ENCODE measurements at regions of chr11 and their contacts with region 1.

Region 1: DNA sequence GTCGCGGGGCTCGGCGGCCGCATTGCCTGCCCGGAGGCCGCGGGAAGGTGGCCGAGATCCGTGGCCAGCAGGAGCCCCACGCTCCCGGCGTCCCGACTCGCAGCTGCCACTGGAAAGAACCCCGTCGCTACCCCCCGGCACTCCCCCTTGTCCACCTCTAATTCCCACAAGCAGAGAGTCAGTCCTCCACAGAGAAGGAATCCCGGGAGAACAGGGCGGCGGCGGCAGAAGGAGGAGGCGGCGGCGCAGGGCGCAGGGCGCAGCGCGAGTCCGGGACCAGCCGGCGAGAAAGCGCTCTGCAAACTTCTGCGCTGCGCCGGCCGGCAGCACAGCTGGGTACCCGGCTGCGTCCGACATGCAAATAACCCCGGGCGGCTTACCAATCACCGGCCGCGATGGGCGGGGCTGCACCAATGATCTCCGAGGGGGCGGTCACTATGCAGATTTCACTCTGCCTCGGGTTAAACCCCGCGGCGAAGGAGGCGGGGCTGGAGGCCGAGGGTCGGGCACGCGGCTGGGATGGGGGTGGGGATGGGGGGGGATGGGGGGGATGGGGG is at the start of gene ABTB2:
- DNase-seq: peak; percentile 99
- H3K4me3 ChIP-seq: peak within 1 kb of the TSS; percentile 40 to 64 (median 54)
- H3K27ac ChIP-seq: peak within 1 kb of the TSS; percentile 83 to 88 (median 85)
- H3K4me1 ChIP-seq: peaks cover 0 to 33% (median 27%) of the 10 kb centered on the region in 4 donors
- H3K27me3 ChIP-seq: no peaks in the 10 kb centered on the region
- CTCF ChIP-seq: no peak
- EP300 ChIP-seq: no peak
- POLR2A ChIP-seq: peak; percentile 83 to 92
- total RNA-seq, gene ABTB2: 1.3 to 2.5 (median 2.1) TPM

Region 2: GRCh38 chr11:33996498-33997454 is 361.0 kb before region 1 on chr11:
- intact Hi-C with region 1: loop called (anchors 2 kb)
- DNase-seq: peak; percentile 74
- H3K4me3 ChIP-seq: no peak overlapping the region
- H3K27ac ChIP-seq: no peak overlapping the region
- H3K4me1 ChIP-seq: peaks cover 0 to 12% (median 4%) of the 10 kb centered on the region in 4 donors
- H3K27me3 ChIP-seq: no peaks in the 10 kb centered on the region
- CTCF ChIP-seq: peak; percentile 55 to 84 (median 80)
- EP300 ChIP-seq: no peak
- POLR2A ChIP-seq: no peak

Region 3: DNA sequence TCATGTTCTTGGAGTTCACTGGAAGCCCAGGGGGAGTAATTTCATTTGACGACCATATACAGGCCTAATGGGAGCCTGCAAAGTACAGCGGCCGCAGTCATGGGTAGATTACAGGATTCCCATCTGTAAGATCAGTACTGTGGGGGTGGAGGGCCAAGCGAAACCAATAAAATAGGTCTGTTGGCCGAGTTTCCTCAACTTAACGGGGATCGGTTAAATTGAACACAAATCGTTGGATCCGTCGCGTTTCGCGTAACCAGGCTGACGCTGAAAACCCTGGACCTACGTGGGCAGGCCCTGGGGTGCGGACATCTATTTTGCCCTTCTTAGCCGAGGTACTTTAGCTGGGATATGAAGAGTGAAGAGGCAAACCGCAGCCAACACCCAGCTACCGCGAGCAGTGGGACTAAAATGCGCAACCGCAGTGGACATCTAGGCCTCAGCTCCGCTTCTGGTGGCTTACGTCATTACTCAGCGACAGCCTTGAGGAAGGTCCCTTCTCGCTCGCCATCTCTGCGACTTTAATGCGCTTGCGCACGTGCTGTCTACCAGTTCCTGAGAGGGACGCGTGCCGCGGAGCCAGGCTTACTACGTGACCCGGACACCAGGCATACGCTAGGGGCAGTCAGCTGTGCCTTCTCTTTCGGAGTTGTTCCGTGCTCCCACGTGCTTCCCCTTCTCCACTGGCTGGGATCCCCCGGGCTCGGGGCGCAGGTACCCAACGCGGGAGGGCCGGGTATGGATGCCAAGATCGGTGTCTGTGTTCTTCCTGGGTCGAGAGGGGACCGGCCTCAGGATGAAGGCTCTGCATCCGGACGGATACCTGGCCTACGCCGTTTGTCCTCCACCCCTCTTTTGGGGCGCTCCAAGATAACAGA is 252.5 kb before region 1 on chr11 and contains the start of gene NAT10:
- intact Hi-C with region 1: loop called (anchors 5 kb)
- DNase-seq: peak; percentile 99
- H3K4me3 ChIP-seq: peak within 1 kb of the TSS; percentile 82 to 89 (median 84)
- H3K27ac ChIP-seq: peak within 1 kb of the TSS; percentile 87 to 95 (median 92)
- H3K4me1 ChIP-seq: peaks cover 0 to 29% (median 21%) of the 10 kb centered on the region in 4 donors
- H3K27me3 ChIP-seq: no peaks in the 10 kb centered on the region
- CTCF ChIP-seq: peak in 1 of 4 experiments; percentile 6
- EP300 ChIP-seq: no peak
- POLR2A ChIP-seq: peak; percentile 69 to 70
- total RNA-seq, gene NAT10: 13.2 to 28.0 (median 19.4) TPM

Region 4: GRCh38 chr11:34149786-34150185 is 208.0 kb before region 1 on chr11:
- intact Hi-C with region 1: no loop called
- DNase-seq: no peak
- H3K4me3 ChIP-seq: no peak overlapping the region
- H3K27ac ChIP-seq: no peak overlapping the region
- H3K4me1 ChIP-seq: peaks cover 0 to 8% (median 6%) of the 10 kb centered on the region in 4 donors
- H3K27me3 ChIP-seq: no peaks in the 10 kb centered on the region
- CTCF ChIP-seq: peak in 1 of 4 experiments; percentile 28
- EP300 ChIP-seq: no peak
- POLR2A ChIP-seq: no peak

Region 5: GRCh38 chr11:34174412-34175041 is 183.3 kb before region 1 on chr11:
- intact Hi-C with region 1: loop called (anchors 1 kb)
- DNase-seq: peak; percentile 90
- H3K4me3 ChIP-seq: peak overlapping the region in 3 of 4 donors; percentile 23 to 39 (median 33)
- H3K27ac ChIP-seq: peak overlapping the region in 1 of 4 donors; percentile 48
- H3K4me1 ChIP-seq: peaks cover 0 to 12% (median 7%) of the 10 kb centered on the region in 4 donors
- H3K27me3 ChIP-seq: no peaks in the 10 kb centered on the region
- CTCF ChIP-seq: peak; percentile 94 to 97 (median 94)
- EP300 ChIP-seq: no peak
- POLR2A ChIP-seq: no peak

Region 6: GRCh38 chr11:34223021-34223813 is 134.6 kb before region 1 on chr11:
- intact Hi-C with region 1: loop called (anchors 2 kb)
- DNase-seq: peak; percentile 94
- H3K4me3 ChIP-seq: no peak overlapping the region
- H3K27ac ChIP-seq: peak overlapping the region; percentile 0 to 57 (median 48)
- H3K4me1 ChIP-seq: peaks cover 0 to 28% (median 16%) of the 10 kb centered on the region in 4 donors
- H3K27me3 ChIP-seq: no peaks in the 10 kb centered on the region
- CTCF ChIP-seq: no peak
- EP300 ChIP-seq: peak in 3 of 4 donors; percentile 8 to 59 (median 49)
- POLR2A ChIP-seq: no peak

Region 7: DNA sequence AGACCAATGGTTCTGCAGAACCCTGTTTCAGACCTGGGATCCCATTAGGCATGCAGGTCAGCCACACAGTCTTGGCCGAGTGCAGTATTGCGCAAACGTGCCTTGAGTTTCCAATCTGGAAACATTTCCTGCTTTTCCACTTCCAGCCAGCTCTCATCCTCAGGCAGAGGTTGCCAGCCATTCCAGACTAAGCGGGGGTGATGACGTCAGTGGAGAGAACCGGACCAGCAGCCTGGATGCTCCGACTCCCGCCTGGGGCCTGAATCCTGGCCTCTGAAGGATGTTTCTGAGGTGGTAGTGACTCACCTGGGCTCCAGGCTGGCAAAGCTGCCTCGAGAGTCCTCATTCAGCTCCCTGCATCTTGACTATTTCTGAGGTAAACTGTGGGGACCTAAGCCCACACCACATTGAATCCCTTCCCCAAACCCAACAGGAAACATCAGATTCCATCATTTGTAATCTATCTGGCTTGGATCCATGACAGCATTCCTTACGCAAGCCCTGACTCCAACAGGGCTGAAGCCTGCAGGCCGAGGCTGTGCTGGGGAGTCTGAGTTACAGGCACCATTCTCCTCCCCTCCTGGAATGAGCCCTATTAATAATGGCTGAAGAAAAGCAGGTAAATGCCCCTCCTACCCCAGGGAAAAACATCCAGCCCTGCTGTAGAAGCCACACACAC is 82.9 kb before region 1 on chr11:
- intact Hi-C with region 1: loop called (anchors 5 kb)
- DNase-seq: peak; percentile 96
- H3K4me3 ChIP-seq: no peak overlapping the region
- H3K27ac ChIP-seq: peak overlapping the region; percentile 28 to 68 (median 60)
- H3K4me1 ChIP-seq: peaks cover 0 to 18% (median 3%) of the 10 kb centered on the region in 4 donors
- H3K27me3 ChIP-seq: no peaks in the 10 kb centered on the region
- CTCF ChIP-seq: no peak
- EP300 ChIP-seq: peak in 1 of 4 donors; percentile 12
- POLR2A ChIP-seq: no peak

Region 8: GRCh38 chr11:34288492-34288891 is 69.3 kb before region 1 on chr11:
- intact Hi-C with region 1: no loop called
- DNase-seq: no peak
- H3K4me3 ChIP-seq: no peak overlapping the region
- H3K27ac ChIP-seq: no peak overlapping the region
- H3K4me1 ChIP-seq: no peaks in the 10 kb centered on the region
- H3K27me3 ChIP-seq: no peaks in the 10 kb centered on the region
- CTCF ChIP-seq: no peak
- EP300 ChIP-seq: no peak
- POLR2A ChIP-seq: no peak

Region 9: GRCh38 chr11:34438529-34439507 is 81.0 kb after region 1 on chr11 and contains the start of gene CAT:
- intact Hi-C with region 1: loop called (anchors 1 kb)
- DNase-seq: peak; percentile 99
- H3K4me3 ChIP-seq: peak within 1 kb of the TSS; percentile 67 to 90 (median 88)
- H3K27ac ChIP-seq: peak within 1 kb of the TSS; percentile 90 to 97 (median 92)
- H3K4me1 ChIP-seq: peaks cover 0 to 27% (median 19%) of the 10 kb centered on the region in 4 donors
- H3K27me3 ChIP-seq: no peaks in the 10 kb centered on the region
- CTCF ChIP-seq: no peak
- EP300 ChIP-seq: peak in 1 of 4 donors; percentile 19
- POLR2A ChIP-seq: peak in 1 of 2 donors; percentile 45
- total RNA-seq, gene CAT: 77.4 to 164 (median 103) TPM

Measured in sigmoid colon (tissue), 7 donors.